Activated B cell treated with CpG ODN at 0.5 μM for 24 hours (primary cell): ENCODE measurements at regions of chr3 and their contacts with region 1.

Region 1: DNA sequence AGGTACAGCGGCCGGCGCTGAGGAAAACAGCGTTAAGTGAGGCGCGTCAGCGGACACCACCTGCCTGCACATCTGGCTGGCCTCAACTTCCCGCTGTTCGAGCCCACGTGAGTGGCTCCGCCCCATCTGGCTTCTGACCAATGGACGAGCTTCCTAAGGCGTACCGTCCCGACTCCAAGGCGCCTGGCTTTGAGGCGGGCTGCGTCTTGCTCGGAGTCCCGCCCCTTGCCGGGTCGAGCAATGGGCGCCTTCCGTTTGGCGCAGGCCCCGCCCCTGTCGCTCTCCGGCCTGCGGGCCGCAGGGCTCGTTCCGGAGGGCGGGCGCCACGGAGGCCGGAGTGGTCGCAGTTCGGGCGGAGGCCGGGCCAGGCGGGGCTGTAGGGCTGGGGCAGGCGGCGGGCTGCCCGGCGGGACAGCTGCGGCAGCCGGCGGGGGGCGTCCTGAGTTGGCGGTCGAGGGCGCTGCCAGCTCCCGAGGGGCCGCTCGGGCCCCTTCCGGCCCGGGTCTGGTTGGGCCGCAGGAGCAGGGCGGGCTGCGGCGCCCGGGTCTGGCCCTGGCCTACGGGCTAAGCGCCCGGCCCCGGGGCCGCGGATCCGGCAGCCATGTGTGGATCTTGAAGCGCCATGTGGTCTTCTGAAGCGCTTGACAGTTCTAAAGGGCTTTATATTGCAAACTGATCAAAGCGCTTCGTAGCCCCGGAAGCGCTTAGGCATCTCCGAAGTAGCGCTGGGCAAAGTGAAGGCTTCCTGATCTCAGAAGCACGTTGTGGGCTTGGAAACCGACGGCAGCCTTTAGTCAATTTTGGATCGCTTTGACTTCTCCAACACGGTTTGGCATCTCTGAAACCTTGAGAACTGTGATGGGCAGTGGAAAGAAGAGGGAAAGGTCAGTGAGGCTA is at the start of gene TATDN2:
- DNase-seq: peak; percentile 88
- ATAC-seq: peak; percentile 97
- H3K4me3 Mint-ChIP-seq: peak within 1 kb of the TSS; percentile 95
- H3K27ac Mint-ChIP-seq: peak within 1 kb of the TSS; percentile 91
- H3K4me1 Mint-ChIP-seq: peaks cover 39% of the 10 kb centered on the region
- H3K27me3 Mint-ChIP-seq: no peaks in the 10 kb centered on the region
- CTCF ChIP-seq: no peak
- total RNA-seq, gene TATDN2: 55.6 and 56.2 TPM in 2 replicates

Region 2: GRCh38 chr3:9649791-9650521 is 598.5 kb before region 1 on chr3:
- CTCF ChIA-PET with region 1: no interaction called
- POLR2A ChIA-PET with region 1: interaction called, 10 read pairs
- intact Hi-C with region 1: no loop called
- DNase-seq: peak; percentile 25
- ATAC-seq: peak; percentile 59
- H3K4me3 Mint-ChIP-seq: peak overlapping the region; percentile 94
- H3K27ac Mint-ChIP-seq: peak overlapping the region; percentile 84
- H3K4me1 Mint-ChIP-seq: peaks cover 54% of the 10 kb centered on the region
- H3K27me3 Mint-ChIP-seq: no peaks in the 10 kb centered on the region
- CTCF ChIP-seq: no peak

Region 3: DNA sequence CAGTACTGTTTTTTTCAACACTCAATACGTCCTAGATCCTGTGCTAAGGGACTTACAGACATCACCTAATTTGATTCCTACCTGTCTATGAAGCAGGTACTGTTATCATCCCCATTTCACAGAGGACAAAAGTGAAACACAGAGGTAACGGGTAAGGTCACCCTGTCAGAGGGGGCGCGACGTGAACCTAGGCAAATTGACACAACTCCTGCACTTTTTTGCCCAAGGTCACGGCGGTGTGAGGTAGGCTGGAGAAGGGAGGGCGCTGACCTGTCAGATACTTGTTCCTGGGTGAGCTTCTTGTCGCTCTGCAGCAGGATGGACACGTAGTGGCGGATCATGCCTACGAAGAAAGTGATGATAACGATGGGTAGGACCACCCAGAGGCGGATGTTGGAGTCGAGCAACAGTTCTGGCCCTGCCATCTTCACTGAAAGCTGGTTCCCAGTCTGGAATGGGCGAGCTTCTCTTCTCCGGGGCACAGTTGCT is 262.2 kb before region 1 on chr3:
- CTCF ChIA-PET with region 1: no interaction called
- POLR2A ChIA-PET with region 1: interaction called, 6 read pairs
- intact Hi-C with region 1: loop called (anchors 1 kb)
- DNase-seq: no peak
- ATAC-seq: peak; percentile 28
- H3K4me3 Mint-ChIP-seq: peak overlapping the region; percentile 98
- H3K27ac Mint-ChIP-seq: peak overlapping the region; percentile 100
- H3K4me1 Mint-ChIP-seq: peaks cover 24% of the 10 kb centered on the region
- H3K27me3 Mint-ChIP-seq: no peaks in the 10 kb centered on the region
- CTCF ChIP-seq: no peak

Region 4: GRCh38 chr3:10115326-10116137 is 132.9 kb before region 1 on chr3 and contains the start of gene BRK1:
- CTCF ChIA-PET with region 1: interaction called, 3 read pairs
- POLR2A ChIA-PET with region 1: interaction called, 9 read pairs
- intact Hi-C with region 1: loop called (anchors 1 kb)
- DNase-seq: peak; percentile 85
- ATAC-seq: peak; percentile 96
- H3K4me3 Mint-ChIP-seq: peak within 1 kb of the TSS; percentile 100
- H3K27ac Mint-ChIP-seq: peak within 1 kb of the TSS; percentile 99
- H3K4me1 Mint-ChIP-seq: peaks cover 40% of the 10 kb centered on the region
- H3K27me3 Mint-ChIP-seq: no peaks in the 10 kb centered on the region
- CTCF ChIP-seq: no peak
- total RNA-seq, gene BRK1: 123 and 141 TPM in 2 replicates

Region 5: DNA sequence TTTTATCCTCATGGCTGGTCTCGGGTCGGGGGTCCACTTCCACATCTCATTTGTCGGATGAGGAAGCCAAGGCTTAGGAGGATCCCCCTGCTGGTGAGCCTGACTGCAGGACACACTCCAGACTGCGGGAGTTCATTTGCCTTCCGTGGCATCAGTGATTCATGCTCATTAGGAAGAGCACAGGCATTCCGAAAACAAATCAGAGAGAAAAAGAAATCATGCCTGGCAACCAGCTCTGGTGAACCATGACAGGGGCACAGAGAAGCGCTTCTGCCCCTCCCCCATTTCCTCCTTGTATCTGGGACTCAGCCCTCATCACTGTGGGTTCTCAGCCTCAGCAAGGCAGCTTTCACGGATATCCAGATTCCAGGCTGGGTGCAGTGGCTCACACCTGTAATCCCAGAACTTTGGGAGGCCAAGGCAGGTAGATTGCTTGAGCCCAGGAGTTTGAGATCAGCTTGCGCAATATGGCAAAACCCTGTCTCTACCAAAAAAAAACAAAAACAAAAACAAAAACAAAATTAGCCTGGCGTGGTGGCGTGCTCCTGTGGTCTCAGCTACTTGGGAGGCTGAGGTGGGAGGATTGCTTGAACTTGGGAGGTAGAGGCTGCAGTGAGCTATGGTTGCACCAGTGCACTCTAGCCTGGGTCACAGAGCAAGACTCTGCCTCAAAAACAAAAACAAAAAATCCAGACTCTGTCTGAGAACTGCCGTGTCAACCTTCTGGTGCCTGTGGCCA is 55.3 kb before region 1 on chr3:
- CTCF ChIA-PET with region 1: no interaction called
- POLR2A ChIA-PET with region 1: interaction called, 11 read pairs
- intact Hi-C with region 1: loop called (anchors 1 kb)
- DNase-seq: peak; percentile 53
- ATAC-seq: peak; percentile 58
- H3K4me3 Mint-ChIP-seq: peak overlapping the region; percentile 79
- H3K27ac Mint-ChIP-seq: peak overlapping the region; percentile 99
- H3K4me1 Mint-ChIP-seq: peaks cover 88% of the 10 kb centered on the region
- H3K27me3 Mint-ChIP-seq: no peaks in the 10 kb centered on the region
- CTCF ChIP-seq: no peak

Region 6: GRCh38 chr3:10280177-10280529 is 31.7 kb after region 1 on chr3:
- CTCF ChIA-PET with region 1: no interaction called
- POLR2A ChIA-PET with region 1: no interaction called
- intact Hi-C with region 1: no loop called
- DNase-seq: no peak
- ATAC-seq: no peak
- H3K4me3 Mint-ChIP-seq: no peak overlapping the region
- H3K27ac Mint-ChIP-seq: no peak overlapping the region
- H3K4me1 Mint-ChIP-seq: peaks cover 12% of the 10 kb centered on the region
- H3K27me3 Mint-ChIP-seq: no peaks in the 10 kb centered on the region
- CTCF ChIP-seq: no peak

Region 7: DNA sequence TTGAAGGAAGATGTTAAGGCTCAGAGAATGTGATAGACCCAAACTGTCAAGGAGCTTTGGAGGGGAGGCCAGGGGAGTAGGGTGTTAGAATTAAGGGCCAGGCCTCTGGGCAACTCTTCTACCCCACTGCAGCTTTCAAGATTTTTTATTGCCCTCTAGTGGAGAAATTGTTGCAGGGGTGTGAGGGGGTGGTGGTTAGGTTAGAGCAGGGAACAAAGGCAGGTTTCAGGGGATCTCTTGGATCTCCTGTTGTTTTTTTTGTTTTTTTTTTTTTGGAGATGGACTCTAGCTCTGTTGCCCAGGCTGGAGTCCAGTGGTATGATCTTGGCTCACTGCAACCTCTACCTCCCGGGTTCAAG is 73.9 kb after region 1 on chr3:
- CTCF ChIA-PET with region 1: no interaction called
- POLR2A ChIA-PET with region 1: interaction called, 10 read pairs
- intact Hi-C with region 1: no loop called
- DNase-seq: no peak
- ATAC-seq: no peak
- H3K4me3 Mint-ChIP-seq: no peak overlapping the region
- H3K27ac Mint-ChIP-seq: no peak overlapping the region
- H3K4me1 Mint-ChIP-seq: peaks cover 31% of the 10 kb centered on the region
- H3K27me3 Mint-ChIP-seq: peaks cover 9% of the 10 kb centered on the region
- CTCF ChIP-seq: no peak